CD4-positive, alpha-beta T cell (primary cell): ENCODE measurements at regions of chr20 and their contacts with region 1.

Region 1: DNA sequence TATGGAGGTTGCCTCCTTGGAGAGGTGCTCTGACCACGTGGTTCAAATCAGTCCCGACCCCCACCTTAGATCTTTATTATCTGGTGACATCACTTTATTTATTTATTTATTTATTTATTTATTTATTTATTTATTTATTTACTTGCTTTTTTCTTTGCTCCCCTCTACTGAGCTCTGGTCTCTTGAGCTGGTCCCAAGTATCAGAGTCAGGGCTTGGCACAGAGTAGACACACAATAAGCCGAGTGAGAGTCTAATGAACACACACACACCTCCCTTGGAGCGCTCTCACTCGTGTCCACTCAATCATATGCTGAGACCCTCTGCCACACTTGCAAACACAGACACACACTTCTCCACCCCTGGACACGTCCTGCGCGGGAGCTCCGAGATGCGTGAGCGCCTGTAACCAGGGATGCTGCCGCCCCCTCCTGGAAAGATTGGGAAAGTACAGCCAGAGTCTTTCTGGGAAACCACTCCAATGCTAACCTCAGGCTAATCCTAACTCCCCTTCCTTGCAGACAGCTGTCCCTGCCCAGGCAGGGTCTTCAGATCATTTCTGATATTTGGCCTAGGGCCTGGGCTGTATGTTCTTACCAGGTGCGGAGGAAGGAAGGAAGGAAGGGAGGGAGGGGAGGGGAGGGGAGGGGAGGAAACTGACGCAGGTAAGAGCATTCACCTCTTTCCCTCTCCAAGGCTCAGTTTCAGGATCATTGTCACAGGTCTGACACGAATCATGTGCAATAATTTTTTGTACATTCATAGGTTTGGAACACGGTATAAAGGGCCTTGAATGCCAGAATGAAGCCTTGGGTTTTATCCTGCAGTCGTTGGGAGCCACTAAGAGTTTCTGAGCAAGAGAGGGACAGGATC is 70.9 kb downstream of the STK35 start:
- DNase-seq: peak; percentile 46 to 75 (median 60)
- ATAC-seq: peak; percentile 59
- H3K4me3 ChIP-seq: no peak overlapping the region
- H3K4me3 Mint-ChIP-seq: no peak overlapping the region
- H3K27ac ChIP-seq: no peak overlapping the region
- H3K27ac Mint-ChIP-seq: no peak overlapping the region
- H3K4me1 ChIP-seq: peaks cover 5% of the 10 kb centered on the region
- H3K4me1 Mint-ChIP-seq: peaks cover 4% of the 10 kb centered on the region
- H3K27me3 ChIP-seq: peaks cover 0 to 3% of the 10 kb centered on the region in 2 experiments
- H3K27me3 Mint-ChIP-seq: peaks cover 10% of the 10 kb centered on the region
- CTCF ChIP-seq: peak; percentile 85

Region 2: GRCh38 chr20:1764136-1765033 is 408.2 kb before region 1 on chr20:
- CTCF ChIA-PET with region 1: interaction called, 4 read pairs
- POLR2A ChIA-PET with region 1: no interaction called
- intact Hi-C with region 1: loop called (anchors 2 to 5 kb)
- DNase-seq: peak; percentile 32 to 77 (median 46)
- ATAC-seq: peak; percentile 75
- H3K4me3 ChIP-seq: no peak overlapping the region
- H3K4me3 Mint-ChIP-seq: no peak overlapping the region
- H3K27ac ChIP-seq: no peak overlapping the region
- H3K27ac Mint-ChIP-seq: no peak overlapping the region
- H3K4me1 ChIP-seq: no peaks in the 10 kb centered on the region
- H3K4me1 Mint-ChIP-seq: no peaks in the 10 kb centered on the region
- H3K27me3 ChIP-seq: no peaks in the 10 kb centered on the region
- H3K27me3 Mint-ChIP-seq: no peaks in the 10 kb centered on the region
- CTCF ChIP-seq: peak; percentile 89

Region 3: DNA sequence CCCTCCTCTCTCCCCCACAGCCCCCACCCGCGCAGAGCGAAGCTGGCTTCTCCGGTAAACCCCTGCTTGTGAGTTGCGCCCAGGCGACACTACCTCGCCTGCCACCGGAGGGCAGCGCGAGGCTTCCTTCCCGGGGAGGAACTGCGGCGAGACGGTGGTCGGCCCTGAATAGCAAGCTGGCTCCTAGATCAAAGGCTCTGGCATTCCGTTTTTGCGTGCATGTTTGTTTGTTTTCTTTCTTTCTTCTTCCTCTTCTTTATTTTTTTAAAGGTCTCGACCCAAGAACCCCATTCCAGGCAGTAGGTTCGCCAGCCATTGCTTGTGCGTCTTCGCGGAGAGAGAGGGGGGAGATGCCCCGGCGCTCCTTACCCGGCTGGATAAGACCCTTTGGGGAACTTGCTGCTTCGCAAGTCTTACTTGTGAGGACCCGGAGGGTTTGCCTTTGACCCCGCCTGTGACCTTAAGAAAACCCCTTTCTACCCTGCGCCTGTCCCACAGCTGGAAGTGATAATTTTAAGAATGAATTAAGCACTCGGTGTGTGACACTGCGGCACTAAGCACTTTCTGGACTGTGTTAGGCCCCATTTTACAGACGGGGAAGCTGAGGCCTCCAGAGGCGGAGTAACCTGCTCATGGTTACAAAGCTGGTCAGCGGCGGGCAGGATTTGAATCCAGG is 370.0 kb before region 1 on chr20:
- CTCF ChIA-PET with region 1: no interaction called
- POLR2A ChIA-PET with region 1: no interaction called
- intact Hi-C with region 1: loop called in 1 of 2 experiments (anchors 1 kb)
- DNase-seq: peak in 7 of 14 experiments; percentile 8 to 64 (median 15)
- ATAC-seq: no peak
- H3K4me3 ChIP-seq: peak overlapping the region; percentile 20
- H3K4me3 Mint-ChIP-seq: peak overlapping the region; percentile 71
- H3K27ac ChIP-seq: no peak overlapping the region
- H3K27ac Mint-ChIP-seq: no peak overlapping the region
- H3K4me1 ChIP-seq: peaks cover 16% of the 10 kb centered on the region
- H3K4me1 Mint-ChIP-seq: peaks cover 16% of the 10 kb centered on the region
- H3K27me3 ChIP-seq: peaks cover 34 to 58% of the 10 kb centered on the region in 2 experiments
- H3K27me3 Mint-ChIP-seq: peaks cover 77% of the 10 kb centered on the region
- CTCF ChIP-seq: no peak

Region 4: DNA sequence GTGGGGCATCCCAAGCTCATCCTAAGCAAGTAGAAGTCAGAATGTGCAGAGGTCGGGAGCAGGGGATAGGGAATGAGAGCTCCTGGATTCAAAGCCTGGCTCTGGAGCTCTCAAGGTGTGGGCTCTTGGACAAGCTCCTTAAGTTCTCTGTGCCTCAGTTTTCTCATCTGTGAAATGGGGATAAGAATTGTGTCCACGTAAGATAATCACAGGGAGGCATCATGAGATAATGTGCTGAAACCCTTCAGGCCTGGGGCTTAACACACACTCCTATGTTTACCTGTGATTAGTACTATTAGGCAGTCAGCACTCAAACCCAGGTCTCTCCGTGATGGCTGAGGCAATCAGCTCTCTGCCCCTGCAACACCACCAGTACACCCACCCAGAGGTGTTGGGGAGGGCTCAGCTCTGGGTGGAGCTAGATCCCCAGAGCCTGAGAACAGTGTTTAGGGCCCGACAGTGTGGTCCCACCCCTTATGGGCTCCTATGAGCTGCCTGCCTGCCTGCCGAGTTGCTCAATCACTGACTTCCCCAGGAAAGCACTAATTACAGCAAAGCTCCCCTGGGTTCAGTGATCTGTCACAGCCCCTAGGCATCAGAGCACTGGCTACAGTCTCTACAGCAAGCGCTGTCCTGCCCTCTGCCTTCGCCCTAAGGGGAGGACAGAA is 283.6 kb before region 1 on chr20:
- CTCF ChIA-PET with region 1: no interaction called
- POLR2A ChIA-PET with region 1: no interaction called
- intact Hi-C with region 1: no loop called
- DNase-seq: peak in 2 of 14 experiments; percentile 60 to 67
- ATAC-seq: no peak
- H3K4me3 ChIP-seq: no peak overlapping the region
- H3K4me3 Mint-ChIP-seq: no peak overlapping the region
- H3K27ac ChIP-seq: no peak overlapping the region
- H3K27ac Mint-ChIP-seq: no peak overlapping the region
- H3K4me1 ChIP-seq: no peaks in the 10 kb centered on the region
- H3K4me1 Mint-ChIP-seq: peaks cover 4% of the 10 kb centered on the region
- H3K27me3 ChIP-seq: peaks cover 10 to 49% of the 10 kb centered on the region in 2 experiments
- H3K27me3 Mint-ChIP-seq: peaks cover 54% of the 10 kb centered on the region
- CTCF ChIP-seq: no peak

Region 5: DNA sequence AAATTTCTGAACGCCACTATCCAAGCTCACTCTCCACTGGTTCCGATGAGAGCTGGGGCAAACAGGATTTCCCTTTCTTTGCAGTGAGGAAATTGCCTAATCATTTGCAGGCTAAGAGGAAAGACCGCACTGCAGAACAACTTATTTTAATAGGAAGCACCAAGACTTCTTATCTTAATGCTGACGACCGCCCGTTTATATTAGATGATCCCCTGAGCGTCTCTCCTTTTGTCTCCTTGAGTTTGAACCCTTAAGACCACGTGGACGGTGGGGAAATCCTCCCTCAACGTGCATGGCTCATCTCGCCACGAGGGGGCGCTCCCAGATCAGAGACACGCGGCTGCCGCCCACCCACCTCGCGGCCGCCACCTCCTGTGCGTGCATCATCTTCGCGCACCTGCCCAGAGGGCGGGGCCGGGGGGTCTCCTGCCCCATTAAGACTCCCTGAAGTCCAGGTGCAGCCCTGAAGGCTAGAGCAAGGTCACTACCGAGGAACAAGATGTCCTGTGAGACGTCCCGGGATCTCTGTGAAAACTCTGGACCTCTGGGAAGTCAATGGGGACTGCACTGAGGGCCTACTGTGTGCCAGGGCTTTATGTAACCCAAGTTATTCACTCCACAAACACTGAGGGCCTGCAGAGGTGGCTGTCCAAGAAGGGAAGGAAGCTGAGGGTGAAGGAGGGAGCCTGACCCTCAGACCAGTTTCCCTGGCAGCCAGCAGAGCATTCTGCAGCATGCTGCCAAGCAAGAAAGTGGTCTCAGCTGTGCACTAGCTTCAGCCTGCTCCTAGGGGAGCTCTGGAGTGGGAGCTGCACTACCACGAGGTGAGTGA is 206.8 kb before region 1 on chr20:
- CTCF ChIA-PET with region 1: interaction called, 20 read pairs
- POLR2A ChIA-PET with region 1: interaction called, 7 read pairs
- intact Hi-C with region 1: loop called (anchors 1 kb)
- DNase-seq: peak; percentile 51 to 82 (median 66)
- ATAC-seq: peak; percentile 55
- H3K4me3 ChIP-seq: peak overlapping the region; percentile 30
- H3K4me3 Mint-ChIP-seq: peak overlapping the region; percentile 23
- H3K27ac ChIP-seq: no peak overlapping the region
- H3K27ac Mint-ChIP-seq: no peak overlapping the region
- H3K4me1 ChIP-seq: peaks cover 9% of the 10 kb centered on the region
- H3K4me1 Mint-ChIP-seq: peaks cover 6% of the 10 kb centered on the region
- H3K27me3 ChIP-seq: peaks cover 3 to 18% of the 10 kb centered on the region in 2 experiments
- H3K27me3 Mint-ChIP-seq: peaks cover 52% of the 10 kb centered on the region
- CTCF ChIP-seq: peak; percentile 95

Region 6: DNA sequence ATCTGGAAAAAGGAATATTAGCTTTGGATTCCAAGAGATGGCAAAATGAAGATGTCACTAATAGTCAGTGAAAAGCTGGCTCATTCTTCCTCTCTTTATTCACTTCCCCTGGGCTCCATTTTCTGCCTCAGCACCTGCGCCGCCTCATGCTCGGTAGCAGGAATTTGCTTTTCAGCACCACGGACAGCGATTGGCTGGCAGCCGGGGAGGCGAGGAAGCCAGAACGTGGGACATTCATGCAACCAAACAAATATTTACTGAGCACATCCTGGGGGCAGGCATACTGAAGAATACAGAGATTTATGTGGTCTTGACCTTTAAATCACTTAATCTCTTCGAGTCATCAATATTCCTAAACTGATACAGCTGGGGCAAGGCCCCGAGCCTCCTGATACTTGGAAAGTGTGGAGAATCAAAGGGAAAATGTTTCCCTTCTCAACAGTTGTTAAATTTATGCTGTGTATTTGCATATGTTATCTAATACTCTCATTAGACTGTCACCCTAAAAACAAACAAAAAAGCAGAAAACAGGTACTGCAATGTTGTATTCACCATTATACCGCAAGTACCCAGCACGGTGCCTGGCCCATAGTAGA is 166.6 kb before region 1 on chr20:
- CTCF ChIA-PET with region 1: interaction called, 11 read pairs
- POLR2A ChIA-PET with region 1: no interaction called
- intact Hi-C with region 1: loop called (anchors 1 kb)
- DNase-seq: peak; percentile 34 to 73 (median 47)
- ATAC-seq: no peak
- H3K4me3 ChIP-seq: no peak overlapping the region
- H3K4me3 Mint-ChIP-seq: no peak overlapping the region
- H3K27ac ChIP-seq: no peak overlapping the region
- H3K27ac Mint-ChIP-seq: no peak overlapping the region
- H3K4me1 ChIP-seq: no peaks in the 10 kb centered on the region
- H3K4me1 Mint-ChIP-seq: no peaks in the 10 kb centered on the region
- H3K27me3 ChIP-seq: peaks cover 8 to 19% of the 10 kb centered on the region in 2 experiments
- H3K27me3 Mint-ChIP-seq: peaks cover 58% of the 10 kb centered on the region
- CTCF ChIP-seq: no peak

Region 7: GRCh38 chr20:2093159-2093781 is 79.3 kb before region 1 on chr20:
- CTCF ChIA-PET with region 1: no interaction called
- POLR2A ChIA-PET with region 1: no interaction called
- intact Hi-C with region 1: no loop called
- DNase-seq: peak in 7 of 14 experiments; percentile 9 to 56 (median 17)
- ATAC-seq: no peak
- H3K4me3 ChIP-seq: no peak overlapping the region
- H3K4me3 Mint-ChIP-seq: no peak overlapping the region
- H3K27ac ChIP-seq: no peak overlapping the region
- H3K27ac Mint-ChIP-seq: no peak overlapping the region
- H3K4me1 ChIP-seq: no peaks in the 10 kb centered on the region
- H3K4me1 Mint-ChIP-seq: no peaks in the 10 kb centered on the region
- H3K27me3 ChIP-seq: peaks cover 22 to 28% of the 10 kb centered on the region in 2 experiments
- H3K27me3 Mint-ChIP-seq: peaks cover 62% of the 10 kb centered on the region
- CTCF ChIP-seq: no peak

Region 8: DNA sequence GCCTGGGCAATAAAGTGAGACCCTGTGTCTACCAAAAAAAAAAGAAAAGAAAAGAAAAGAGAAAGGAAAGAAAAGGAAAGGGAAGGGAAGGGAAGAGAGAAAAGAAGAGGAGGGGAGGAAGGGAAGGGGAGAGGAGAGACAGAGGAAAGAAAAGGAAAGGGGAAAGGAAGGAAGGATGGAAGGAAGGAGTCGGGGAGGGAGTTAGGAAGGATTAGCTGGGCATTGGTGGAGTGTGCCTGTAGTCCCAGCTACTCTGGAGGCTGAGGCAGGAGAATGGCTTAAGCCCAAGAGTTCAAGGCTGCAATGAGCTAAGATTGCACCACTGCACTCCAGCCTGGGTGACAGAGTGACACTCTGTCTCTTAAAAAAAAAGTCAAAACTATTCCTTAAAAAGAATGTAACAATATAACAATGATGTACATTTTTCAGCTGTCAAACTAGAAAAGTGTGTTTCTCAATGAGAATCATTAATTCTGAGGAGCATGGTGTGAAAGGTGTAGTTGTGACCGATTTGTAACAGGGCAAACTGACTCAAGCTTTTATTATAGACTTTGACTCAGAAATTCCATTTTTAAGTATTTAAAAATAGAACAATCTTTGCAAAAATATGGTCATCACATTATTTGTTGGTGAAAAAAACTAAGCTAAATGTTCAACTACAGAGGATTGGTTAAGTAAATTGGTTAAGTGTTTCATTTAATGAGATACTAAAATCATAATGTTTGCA is 283.4 kb after region 1 on chr20:
- CTCF ChIA-PET with region 1: no interaction called
- POLR2A ChIA-PET with region 1: no interaction called
- intact Hi-C with region 1: no loop called
- DNase-seq: no peak
- ATAC-seq: no peak
- H3K4me3 ChIP-seq: no peak overlapping the region
- H3K4me3 Mint-ChIP-seq: no peak overlapping the region
- H3K27ac ChIP-seq: no peak overlapping the region
- H3K27ac Mint-ChIP-seq: no peak overlapping the region
- H3K4me1 ChIP-seq: no peaks in the 10 kb centered on the region
- H3K4me1 Mint-ChIP-seq: no peaks in the 10 kb centered on the region
- H3K27me3 ChIP-seq: no peaks in the 10 kb centered on the region
- H3K27me3 Mint-ChIP-seq: no peaks in the 10 kb centered on the region
- CTCF ChIP-seq: no peak